ENCODE measurements at regions of chr7 and their contacts with region 1.

Region 1: DNA sequence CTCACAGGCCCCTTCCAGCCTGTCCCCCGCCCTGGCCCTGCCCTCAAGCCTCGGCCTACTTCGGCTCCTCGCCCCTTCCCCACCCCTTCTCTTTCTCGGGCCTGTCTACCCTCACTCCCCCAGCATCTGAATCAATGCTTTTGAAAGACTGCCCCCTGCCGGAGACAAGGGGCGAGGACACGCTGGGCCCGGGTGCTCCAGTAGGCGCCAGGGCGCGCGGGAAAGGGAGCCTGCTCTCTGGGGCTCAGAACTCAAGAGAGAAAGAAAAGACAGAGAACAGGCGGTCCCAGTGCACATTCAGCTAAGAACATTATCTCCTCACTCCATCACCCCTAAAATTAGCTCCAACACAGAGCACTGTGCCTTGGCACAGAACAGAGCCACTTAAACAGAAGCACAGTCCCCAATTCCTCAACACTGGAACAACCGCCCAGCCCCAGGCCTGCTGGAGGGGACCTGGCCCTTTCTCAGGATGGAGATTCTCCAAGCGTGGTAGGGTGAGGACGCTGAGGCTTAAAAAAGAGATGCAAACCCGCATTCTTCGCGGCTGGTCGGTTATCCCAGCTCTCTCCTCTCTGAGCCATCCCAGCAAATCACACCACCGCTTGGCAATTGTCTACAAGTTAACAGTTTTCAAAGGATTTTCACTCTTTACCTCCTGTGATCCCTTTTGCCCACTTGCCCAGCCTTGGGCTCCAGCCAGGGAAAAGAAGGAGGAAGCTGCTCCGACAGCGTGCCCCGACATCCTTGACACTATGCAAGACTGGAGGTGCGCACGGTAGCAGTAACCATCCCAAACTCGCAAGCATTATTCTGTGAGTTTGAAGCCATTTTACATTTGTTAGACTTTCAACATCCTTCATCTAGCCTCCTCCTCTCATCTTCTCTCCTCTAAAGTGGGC is 2.1 kb downstream of the GIGYF1 start:
- DNase-seq: peak; percentile 73 to 80 (median 78)
- H3K4me3 ChIP-seq: peak overlapping the region in 1 of 2 donors; percentile 7
- H3K4me3 Mint-ChIP-seq: peak overlapping the region; percentile 88 to 96 (median 92)
- H3K27ac ChIP-seq: no peak overlapping the region
- H3K27ac Mint-ChIP-seq: peak overlapping the region; percentile 36 to 93 (median 79)
- H3K4me1 ChIP-seq: peaks cover 40% of the 10 kb centered on the region
- H3K4me1 Mint-ChIP-seq: peaks cover 23 to 51% (median 36%) of the 10 kb centered on the region in 4 donors
- H3K27me3 ChIP-seq: no peaks in the 10 kb centered on the region
- H3K27me3 Mint-ChIP-seq: no peaks in the 10 kb centered on the region

Region 2: DNA sequence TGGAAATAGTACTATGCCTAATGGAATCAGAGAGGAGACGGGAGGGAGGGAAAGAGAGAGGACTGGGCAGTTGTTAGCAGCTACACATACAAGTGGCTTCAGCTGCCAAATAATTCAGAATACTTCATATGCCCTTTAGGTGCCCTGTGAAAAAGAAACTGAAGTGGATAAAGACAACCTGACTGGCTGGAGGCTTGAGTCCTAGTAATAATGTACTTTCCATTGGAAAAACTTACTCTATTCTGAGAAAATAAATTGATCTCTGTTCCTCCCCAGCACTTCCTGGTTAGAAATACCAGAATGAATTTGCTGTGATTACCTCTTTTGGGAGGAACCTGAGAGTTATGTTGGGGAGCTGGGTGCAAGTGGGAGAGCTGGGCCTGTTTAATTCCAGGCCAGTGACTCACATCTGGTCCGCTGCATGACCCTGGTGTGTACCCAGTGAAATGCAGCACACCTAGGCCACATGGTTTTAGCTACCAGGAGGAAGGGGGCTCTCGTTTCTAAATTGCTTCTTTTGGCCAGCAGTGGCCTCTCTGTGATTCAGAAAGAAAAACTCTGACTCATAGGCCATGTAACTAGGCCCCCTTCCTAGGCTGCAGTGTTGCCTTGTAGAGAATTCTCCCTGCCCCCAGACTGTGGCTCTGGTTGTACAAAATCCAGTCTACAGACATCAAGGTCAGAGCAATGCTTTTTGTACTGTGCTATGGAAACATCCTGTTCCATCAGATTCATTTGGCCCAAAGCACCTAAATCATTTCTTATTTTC is 146.4 kb before region 1 on chr7:
- CTCF ChIA-PET with region 1: interaction called, 12 read pairs
- POLR2A ChIA-PET with region 1: no interaction called
- intact Hi-C with region 1: no loop called
- DNase-seq: peak in 1 of 5 donors; percentile 84
- H3K4me3 ChIP-seq: peak overlapping the region; percentile 25 to 29
- H3K4me3 Mint-ChIP-seq: peak overlapping the region; percentile 69 to 97 (median 88)
- H3K27ac ChIP-seq: peak overlapping the region; percentile 66
- H3K27ac Mint-ChIP-seq: peak overlapping the region; percentile 61 to 98 (median 91)
- H3K4me1 ChIP-seq: peaks cover 99% of the 10 kb centered on the region
- H3K4me1 Mint-ChIP-seq: peaks cover 76 to 100% (median 89%) of the 10 kb centered on the region in 4 donors
- H3K27me3 ChIP-seq: no peaks in the 10 kb centered on the region
- H3K27me3 Mint-ChIP-seq: no peaks in the 10 kb centered on the region

Region 3: DNA sequence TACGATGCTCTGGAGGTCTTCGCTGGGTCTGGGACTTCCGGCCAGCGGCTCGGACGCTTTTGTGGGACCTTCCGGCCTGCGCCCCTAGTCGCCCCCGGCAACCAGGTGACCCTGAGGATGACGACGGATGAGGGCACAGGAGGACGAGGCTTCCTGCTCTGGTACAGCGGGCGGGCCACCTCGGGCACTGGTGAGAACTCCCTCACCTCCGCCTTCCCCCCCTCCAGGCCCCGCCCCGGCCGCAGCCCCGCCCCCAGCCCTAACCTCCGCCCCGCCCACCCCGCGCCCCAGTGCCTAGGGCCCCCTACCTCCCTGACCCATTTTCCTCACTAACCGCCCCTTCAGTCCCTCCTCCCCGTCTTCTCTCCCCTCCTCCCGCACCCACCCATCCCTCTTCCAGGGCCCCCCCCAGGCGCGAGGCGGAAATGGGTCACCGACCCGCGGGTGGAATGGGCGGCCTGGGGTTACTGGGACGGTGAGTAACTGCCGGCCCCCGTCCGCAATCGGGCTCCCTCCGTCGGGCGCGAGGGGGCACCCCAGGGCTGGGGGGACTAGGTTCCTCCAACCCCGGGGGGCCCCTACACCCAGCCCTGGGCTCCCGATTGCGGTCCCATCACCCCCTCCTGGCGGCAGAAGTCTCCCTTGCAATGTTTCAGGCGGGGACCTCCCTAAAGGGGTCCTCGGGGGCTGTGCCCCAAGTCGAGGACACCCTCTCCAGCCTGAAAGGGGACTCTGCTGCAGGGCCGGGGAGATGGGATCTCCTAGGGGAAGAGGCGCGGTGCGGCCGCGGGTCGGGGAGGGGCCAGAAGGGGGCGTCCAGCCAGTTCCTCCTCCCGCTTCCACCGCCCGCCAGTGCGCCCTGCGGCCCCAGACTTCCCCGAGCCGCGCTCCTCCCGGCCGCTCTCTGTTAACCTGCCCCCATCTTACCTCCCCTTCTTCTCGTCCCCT is 87.6 kb before region 1 on chr7:
- CTCF ChIA-PET with region 1: interaction called, 24 read pairs
- POLR2A ChIA-PET with region 1: interaction called, 5 read pairs
- intact Hi-C with region 1: loop called (anchors 1 kb)
- DNase-seq: peak; percentile 63 to 83 (median 68)
- H3K4me3 ChIP-seq: peak overlapping the region; percentile 34 to 58
- H3K4me3 Mint-ChIP-seq: peak overlapping the region; percentile 78 to 93 (median 87)
- H3K27ac ChIP-seq: peak overlapping the region; percentile 64
- H3K27ac Mint-ChIP-seq: peak overlapping the region; percentile 71 to 95 (median 91)
- H3K4me1 ChIP-seq: peaks cover 21% of the 10 kb centered on the region
- H3K4me1 Mint-ChIP-seq: peaks cover 9 to 35% (median 16%) of the 10 kb centered on the region in 4 donors
- H3K27me3 ChIP-seq: no peaks in the 10 kb centered on the region
- H3K27me3 Mint-ChIP-seq: no peaks in the 10 kb centered on the region

Region 4: DNA sequence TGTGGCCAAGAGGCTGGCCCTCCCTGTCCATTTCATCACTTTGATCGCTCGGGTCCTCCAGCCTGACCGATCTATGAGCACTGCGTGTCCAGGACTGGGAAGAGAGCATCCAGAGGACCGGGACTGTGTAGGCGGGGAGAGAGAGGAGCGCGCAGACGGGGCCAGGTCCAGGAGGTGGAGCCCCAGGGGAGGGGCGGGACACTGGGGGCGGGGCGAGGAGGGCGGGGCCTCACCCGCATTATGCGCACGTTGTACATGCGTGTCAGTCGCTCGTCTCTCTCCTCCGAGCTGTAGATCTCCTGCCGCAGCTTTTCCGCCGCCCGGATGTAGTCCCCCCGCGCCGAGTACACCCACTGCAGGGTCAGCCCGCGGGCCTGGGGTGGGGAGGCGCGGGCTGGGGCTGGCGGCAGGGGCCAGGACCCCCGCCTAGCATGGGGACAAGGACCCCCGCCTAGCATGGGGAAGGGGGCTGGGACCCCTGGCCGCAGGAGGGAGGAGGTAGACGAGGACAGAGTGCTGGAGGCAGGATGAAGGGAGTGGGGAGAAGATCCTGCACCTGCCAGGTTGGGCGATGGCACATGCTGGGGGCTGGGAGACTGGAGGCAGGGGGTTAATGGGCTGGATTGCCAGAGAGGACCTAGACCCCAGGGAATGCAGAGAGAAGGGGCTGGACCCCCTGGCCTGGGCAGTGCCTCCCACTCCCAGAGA is 65.2 kb before region 1 on chr7:
- CTCF ChIA-PET with region 1: interaction called, 25 read pairs
- POLR2A ChIA-PET with region 1: interaction called, 6 read pairs
- intact Hi-C with region 1: no loop called
- DNase-seq: peak; percentile 79 to 91 (median 82)
- H3K4me3 ChIP-seq: peak overlapping the region; percentile 36 to 67
- H3K4me3 Mint-ChIP-seq: peak overlapping the region; percentile 61 to 83 (median 76)
- H3K27ac ChIP-seq: peak overlapping the region; percentile 63
- H3K27ac Mint-ChIP-seq: peak overlapping the region; percentile 45 to 94 (median 83)
- H3K4me1 ChIP-seq: peaks cover 24% of the 10 kb centered on the region
- H3K4me1 Mint-ChIP-seq: peaks cover 15 to 41% (median 28%) of the 10 kb centered on the region in 4 donors
- H3K27me3 ChIP-seq: no peaks in the 10 kb centered on the region
- H3K27me3 Mint-ChIP-seq: no peaks in the 10 kb centered on the region

Region 5: GRCh38 chr7:100640517-100641440 is 51.1 kb before region 1 on chr7:
- CTCF ChIA-PET with region 1: interaction called, 12 read pairs
- POLR2A ChIA-PET with region 1: no interaction called
- intact Hi-C with region 1: no loop called
- DNase-seq: no peak
- H3K4me3 ChIP-seq: no peak overlapping the region
- H3K4me3 Mint-ChIP-seq: no peak overlapping the region
- H3K27ac ChIP-seq: no peak overlapping the region
- H3K27ac Mint-ChIP-seq: no peak overlapping the region
- H3K4me1 ChIP-seq: no peaks in the 10 kb centered on the region
- H3K4me1 Mint-ChIP-seq: no peaks in the 10 kb centered on the region
- H3K27me3 ChIP-seq: no peaks in the 10 kb centered on the region
- H3K27me3 Mint-ChIP-seq: peaks cover 0 to 4% of the 10 kb centered on the region in 2 donors

Region 6: DNA sequence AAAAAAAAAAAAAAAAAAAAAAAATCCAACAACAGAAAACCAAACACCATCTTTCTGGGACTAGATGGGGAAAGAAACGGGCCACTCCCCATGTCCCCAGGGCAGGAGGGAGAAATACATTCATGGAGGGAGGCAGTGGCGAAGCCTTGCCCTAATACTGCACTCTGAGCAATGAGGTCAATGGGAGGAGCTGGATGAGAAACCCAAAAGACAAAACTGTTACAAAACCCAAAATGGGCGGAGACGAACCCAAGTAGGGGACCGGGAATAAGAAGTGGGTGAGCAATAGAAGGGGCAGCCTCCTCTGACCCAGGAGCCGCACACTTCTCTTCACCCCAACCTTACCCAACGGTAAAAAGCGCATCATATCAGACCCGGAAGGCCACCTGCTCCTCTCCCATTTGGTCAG is 11.8 kb before region 1 on chr7:
- CTCF ChIA-PET with region 1: interaction called, 88 read pairs
- POLR2A ChIA-PET with region 1: interaction called, 44 read pairs
- intact Hi-C with region 1: no loop called
- DNase-seq: no peak
- H3K4me3 ChIP-seq: no peak overlapping the region
- H3K4me3 Mint-ChIP-seq: peak overlapping the region in 2 of 8 donors; percentile 7 to 18
- H3K27ac ChIP-seq: peak overlapping the region; percentile 9
- H3K27ac Mint-ChIP-seq: peak overlapping the region; percentile 37 to 90 (median 75)
- H3K4me1 ChIP-seq: peaks cover 41% of the 10 kb centered on the region
- H3K4me1 Mint-ChIP-seq: peaks cover 7 to 43% (median 29%) of the 10 kb centered on the region in 4 donors
- H3K27me3 ChIP-seq: no peaks in the 10 kb centered on the region
- H3K27me3 Mint-ChIP-seq: peaks cover 0 to 1% of the 10 kb centered on the region in 2 donors

Region 7: DNA sequence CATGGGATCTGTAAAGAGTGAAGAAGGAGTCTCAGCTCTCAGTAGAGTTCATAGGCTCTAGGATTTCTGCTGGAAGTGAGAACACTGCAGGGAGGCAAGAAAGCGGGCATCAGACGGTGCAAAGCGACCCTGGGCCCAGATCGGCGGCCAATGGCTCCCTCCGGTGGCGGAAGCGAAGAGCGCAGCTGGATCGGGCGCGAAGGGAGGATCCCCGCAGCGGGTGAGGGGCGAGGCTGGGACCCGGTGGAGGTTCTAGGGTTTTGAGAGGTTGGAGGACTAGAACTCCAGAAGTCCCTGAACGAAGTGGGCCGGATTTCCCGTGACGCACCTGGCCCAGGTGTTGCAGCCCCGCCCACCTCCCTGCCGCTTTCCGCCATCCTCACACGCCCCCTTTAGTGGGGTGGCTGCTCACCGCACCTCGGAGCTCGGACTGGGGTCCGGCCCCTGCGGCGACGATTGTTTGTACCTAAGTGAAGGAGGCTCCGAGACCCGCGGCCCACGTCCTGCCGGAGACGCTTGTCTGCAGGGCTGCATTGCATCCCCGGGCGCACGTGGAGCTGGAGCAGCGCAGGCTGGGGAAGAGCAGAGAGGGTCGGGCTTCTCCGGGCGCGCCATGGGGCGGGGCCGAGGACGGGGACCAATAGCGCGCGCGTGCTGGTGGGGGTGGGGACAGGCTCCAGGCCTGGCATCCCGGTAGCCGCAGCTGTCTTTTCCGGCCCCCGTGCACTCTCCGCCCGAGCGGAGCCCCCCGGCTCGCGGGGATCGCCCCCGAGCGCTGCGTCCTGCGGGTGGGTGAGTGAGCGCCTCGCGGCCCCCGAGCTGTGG is 160.3 kb after region 1 on chr7 and contains the start of gene SLC12A9:
- CTCF ChIA-PET with region 1: interaction called, 5 read pairs
- POLR2A ChIA-PET with region 1: interaction called, 3 read pairs
- intact Hi-C with region 1: loop called (anchors 5 kb)
- DNase-seq: peak; percentile 83 to 91 (median 88)
- H3K4me3 ChIP-seq: peak within 1 kb of the TSS; percentile 84 to 86
- H3K4me3 Mint-ChIP-seq: peak within 1 kb of the TSS; percentile 88 to 96 (median 92)
- H3K27ac ChIP-seq: peak within 1 kb of the TSS; percentile 51
- H3K27ac Mint-ChIP-seq: peak within 1 kb of the TSS; percentile 88 to 95 (median 93)
- H3K4me1 ChIP-seq: peaks cover 25% of the 10 kb centered on the region
- H3K4me1 Mint-ChIP-seq: peaks cover 11 to 36% (median 20%) of the 10 kb centered on the region in 4 donors
- H3K27me3 ChIP-seq: no peaks in the 10 kb centered on the region
- H3K27me3 Mint-ChIP-seq: no peaks in the 10 kb centered on the region
- total RNA-seq, gene SLC12A9: 63.7 to 64.6 TPM

Region 8: DNA sequence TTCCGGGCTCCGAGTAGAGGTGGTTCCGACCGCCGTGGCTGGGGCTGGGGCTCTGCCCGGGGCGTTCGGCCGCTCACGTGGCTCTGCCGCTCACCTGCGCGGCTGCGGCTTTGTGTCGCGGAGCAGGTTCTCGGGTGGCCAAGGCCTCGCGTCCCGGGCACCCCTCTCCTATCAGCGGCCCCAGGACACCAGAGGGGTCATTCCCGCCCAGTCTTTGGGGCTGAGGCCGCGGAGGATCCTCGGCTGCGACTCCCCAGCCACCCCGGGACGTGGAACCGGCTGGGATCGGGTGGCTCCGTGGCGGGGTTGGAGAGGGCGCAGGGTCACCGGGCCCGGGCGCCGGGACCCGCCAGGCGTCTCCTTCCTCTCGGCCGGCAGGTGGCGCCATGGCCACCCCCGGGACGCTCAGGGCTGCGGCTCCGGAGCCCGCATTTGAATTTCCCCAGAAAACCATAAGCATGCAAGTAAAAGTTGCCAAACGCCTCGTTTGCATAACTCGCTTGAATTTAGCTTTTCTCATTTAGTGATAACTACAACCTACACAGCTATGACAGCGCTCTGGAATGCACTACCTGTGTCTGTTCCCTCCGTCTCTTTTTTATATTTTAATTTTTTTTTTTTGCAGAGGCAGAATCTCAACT is 671.9 kb after region 1 on chr7:
- CTCF ChIA-PET with region 1: no interaction called
- POLR2A ChIA-PET with region 1: no interaction called
- intact Hi-C with region 1: no loop called
- DNase-seq: peak; percentile 54 to 69 (median 63)
- H3K4me3 ChIP-seq: peak overlapping the region in 1 of 2 donors; percentile 28
- H3K4me3 Mint-ChIP-seq: peak overlapping the region in 6 of 8 donors; percentile 39 to 54 (median 43)
- H3K27ac ChIP-seq: no peak overlapping the region
- H3K27ac Mint-ChIP-seq: no peak overlapping the region
- H3K4me1 ChIP-seq: peaks cover 6% of the 10 kb centered on the region
- H3K4me1 Mint-ChIP-seq: peaks cover 0 to 5% (median 0%) of the 10 kb centered on the region in 4 donors
- H3K27me3 ChIP-seq: peaks cover 13% of the 10 kb centered on the region
- H3K27me3 Mint-ChIP-seq: peaks cover 18 to 25% of the 10 kb centered on the region in 2 donors

Measured in CD4-positive, alpha-beta memory T cell (primary cell).